ENCODE measurements at regions of chr6 and their contacts with region 1.

Region 1: GRCh38 chr6:116217069-116217468 is 36.8 kb downstream of the TSPYL4 start:
- DNase-seq: peak; percentile 21 to 51 (median 27)
- ATAC-seq: peak; percentile 81
- H3K4me3 ChIP-seq: no peak overlapping the region
- H3K27ac ChIP-seq: no peak overlapping the region
- H3K4me1 ChIP-seq: peaks cover 0 to 3% of the 10 kb centered on the region in 2 experiments; a peak in 2 of 5 replicates
- H3K27me3 ChIP-seq: no peaks in the 10 kb centered on the region
- CTCF ChIP-seq: peak; percentile 46 to 70 (median 52); a peak in 4 of 6 replicates
- EP300 ChIP-seq: no peak
- POLR2A ChIP-seq: no peak
- RAD21 ChIP-seq: peak; percentile 43 to 61

Region 2: GRCh38 chr6:116115781-116116180 is 101.3 kb before region 1 on chr6:
- CTCF ChIA-PET with region 1: no interaction called
- POLR2A ChIA-PET with region 1: no interaction called
- in situ Hi-C with region 1: no loop called
- intact Hi-C with region 1: loop called (anchors 2 kb)
- DNase-seq: peak in 1 of 4 experiments; percentile 9
- ATAC-seq: no peak
- H3K4me3 ChIP-seq: no peak overlapping the region
- H3K27ac ChIP-seq: no peak overlapping the region
- H3K4me1 ChIP-seq: no peaks in the 10 kb centered on the region
- H3K27me3 ChIP-seq: no peaks in the 10 kb centered on the region
- CTCF ChIP-seq: peak in 2 of 3 experiments; percentile 9 to 53; a peak in 3 of 6 replicates
- EP300 ChIP-seq: no peak
- POLR2A ChIP-seq: no peak
- RAD21 ChIP-seq: no peak

Region 3: GRCh38 chr6:116144605-116145004 is 72.5 kb before region 1 on chr6:
- CTCF ChIA-PET with region 1: no interaction called
- POLR2A ChIA-PET with region 1: no interaction called
- in situ Hi-C with region 1: no loop called
- intact Hi-C with region 1: loop called (anchors 5 kb)
- DNase-seq: peak in 2 of 4 experiments; percentile 27 to 28
- ATAC-seq: peak; percentile 76
- H3K4me3 ChIP-seq: no peak overlapping the region
- H3K27ac ChIP-seq: no peak overlapping the region
- H3K4me1 ChIP-seq: peaks cover 0 to 10% of the 10 kb centered on the region in 2 experiments; a peak in 2 of 5 replicates
- H3K27me3 ChIP-seq: no peaks in the 10 kb centered on the region
- CTCF ChIP-seq: no peak
- EP300 ChIP-seq: no peak
- POLR2A ChIP-seq: no peak
- RAD21 ChIP-seq: no peak

Region 4: DNA sequence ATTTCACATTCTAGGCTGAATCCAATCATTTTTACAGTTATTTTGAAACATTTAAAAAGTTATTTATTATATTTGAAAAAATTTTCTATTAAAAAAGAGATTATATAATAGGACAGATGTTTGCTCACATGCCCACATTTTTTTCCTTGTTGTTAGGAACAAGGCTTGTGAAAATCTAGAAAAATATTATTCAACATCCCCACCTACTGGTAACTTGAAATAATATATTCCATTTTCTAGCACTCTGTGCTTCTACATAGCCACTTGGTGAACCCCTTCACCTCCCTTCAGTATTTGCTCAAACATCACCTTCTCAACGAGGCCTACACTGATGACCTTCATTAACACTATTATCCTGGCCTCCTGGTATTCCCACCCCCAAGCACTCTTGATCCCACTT is 630.2 kb after region 1 on chr6:
- CTCF ChIA-PET with region 1: no interaction called
- POLR2A ChIA-PET with region 1: no interaction called
- in situ Hi-C with region 1: no loop called
- intact Hi-C with region 1: loop called (anchors 5 kb)
- DNase-seq: peak in 2 of 4 experiments; percentile 17 to 38
- ATAC-seq: peak; percentile 90
- H3K4me3 ChIP-seq: no peak overlapping the region
- H3K27ac ChIP-seq: no peak overlapping the region
- H3K4me1 ChIP-seq: no peaks in the 10 kb centered on the region
- H3K27me3 ChIP-seq: no peaks in the 10 kb centered on the region
- CTCF ChIP-seq: peak; percentile 28 to 67 (median 33); a peak in 3 of 6 replicates
- EP300 ChIP-seq: no peak
- POLR2A ChIP-seq: no peak
- RAD21 ChIP-seq: peak; percentile 59 to 62

Measured in K562 (cell line).